Naive thymus-derived CD4-positive, alpha-beta T cell (primary cell): ENCODE measurements at regions of chr3 and their contacts with region 1.

Region 1: DNA sequence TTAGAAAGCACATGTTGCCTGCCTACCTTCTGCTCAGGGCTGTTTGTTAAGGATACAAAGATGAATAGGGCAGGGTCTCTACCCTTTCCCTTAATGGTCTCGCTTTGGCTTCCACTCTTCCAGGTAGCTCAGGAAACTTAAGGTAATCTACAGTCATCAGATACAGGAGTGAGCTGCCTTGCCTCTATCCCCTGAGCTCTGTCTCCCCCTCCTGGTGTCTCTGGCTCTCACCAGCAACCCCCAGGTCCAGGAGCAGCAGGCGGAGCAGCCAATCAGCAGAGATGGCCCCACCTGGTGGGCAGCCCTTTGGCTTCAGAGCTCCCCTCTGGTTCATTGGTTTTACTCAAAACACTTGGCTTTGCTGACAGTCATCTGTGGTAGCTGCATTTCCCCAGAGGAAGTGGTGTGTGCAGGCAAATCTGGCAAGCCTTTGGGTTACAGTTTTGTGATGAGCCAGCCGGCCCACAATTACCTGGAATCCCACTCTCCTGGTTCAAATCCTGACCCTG is 8.5 kb upstream of the CX3CR1 start:
- DNase-seq: peak; percentile 49 to 77 (median 71)
- ATAC-seq: peak; percentile 97
- H3K4me3 ChIP-seq: no peak overlapping the region
- H3K4me3 Mint-ChIP-seq: peak overlapping the region in 1 of 10 donors; percentile 3
- H3K27ac ChIP-seq: no peak overlapping the region
- H3K27ac Mint-ChIP-seq: peak overlapping the region in 2 of 9 donors; percentile 7 to 66
- H3K4me1 ChIP-seq: peaks cover 0 to 4% of the 10 kb centered on the region in 2 donors
- H3K4me1 Mint-ChIP-seq: peaks cover 7 to 62% (median 17%) of the 10 kb centered on the region in 7 donors
- H3K27me3 ChIP-seq: no peaks in the 10 kb centered on the region
- H3K27me3 Mint-ChIP-seq: no peaks in the 10 kb centered on the region

Region 2: GRCh38 chr3:38018296-38019266 is 1269.8 kb before region 1 on chr3:
- CTCF ChIA-PET with region 1: no interaction called
- POLR2A ChIA-PET with region 1: no interaction called
- intact Hi-C with region 1: no loop called
- DNase-seq: no peak
- ATAC-seq: no peak
- H3K4me3 ChIP-seq: no peak overlapping the region
- H3K4me3 Mint-ChIP-seq: no peak overlapping the region
- H3K27ac ChIP-seq: no peak overlapping the region
- H3K27ac Mint-ChIP-seq: peak overlapping the region in 4 of 9 donors; percentile 54 to 72 (median 58)
- H3K4me1 ChIP-seq: peaks cover 8% of the 10 kb centered on the region in 2 donors
- H3K4me1 Mint-ChIP-seq: peaks cover 9 to 22% (median 14%) of the 10 kb centered on the region in 7 donors
- H3K27me3 ChIP-seq: no peaks in the 10 kb centered on the region
- H3K27me3 Mint-ChIP-seq: no peaks in the 10 kb centered on the region

Region 3: DNA sequence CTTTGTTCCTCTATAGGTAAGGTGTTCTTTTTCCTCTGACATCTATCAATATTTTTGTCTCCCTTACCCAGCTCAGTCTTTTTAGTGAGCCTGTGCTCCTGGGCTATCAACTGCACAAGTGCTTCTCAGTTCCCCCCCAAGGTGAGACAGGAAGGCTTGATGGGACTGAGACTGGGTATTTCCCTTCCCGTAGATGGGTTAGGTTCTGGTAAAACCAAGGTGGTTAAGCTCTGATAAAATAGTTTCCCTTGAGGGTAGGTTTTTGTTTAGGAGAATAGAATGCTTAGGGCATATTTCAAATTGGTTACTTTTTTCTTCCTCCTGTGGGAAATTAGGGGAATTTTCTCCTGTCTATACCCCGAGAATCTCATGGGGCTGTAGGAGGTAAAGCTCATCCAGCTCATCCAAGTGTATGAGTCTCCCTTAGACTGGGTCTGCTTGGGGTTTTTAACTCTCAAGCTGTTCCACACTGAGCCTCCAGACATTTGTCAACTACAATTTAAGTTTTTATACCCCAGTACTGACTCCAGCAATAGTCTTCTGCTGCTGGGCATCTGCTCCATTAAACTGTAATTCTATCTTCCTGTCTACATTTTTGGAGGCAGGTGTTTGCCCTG is 1078.1 kb before region 1 on chr3:
- CTCF ChIA-PET with region 1: no interaction called
- POLR2A ChIA-PET with region 1: no interaction called
- intact Hi-C with region 1: no loop called
- DNase-seq: no peak
- ATAC-seq: peak; percentile 48
- H3K4me3 ChIP-seq: no peak overlapping the region
- H3K4me3 Mint-ChIP-seq: peak overlapping the region in 2 of 10 donors; percentile 21 to 52
- H3K27ac ChIP-seq: no peak overlapping the region
- H3K27ac Mint-ChIP-seq: peak overlapping the region in 5 of 9 donors; percentile 5 to 74 (median 65)
- H3K4me1 ChIP-seq: no peaks in the 10 kb centered on the region
- H3K4me1 Mint-ChIP-seq: peaks cover 11 to 71% (median 68%) of the 10 kb centered on the region in 7 donors
- H3K27me3 ChIP-seq: no peaks in the 10 kb centered on the region
- H3K27me3 Mint-ChIP-seq: no peaks in the 10 kb centered on the region

Region 4: DNA sequence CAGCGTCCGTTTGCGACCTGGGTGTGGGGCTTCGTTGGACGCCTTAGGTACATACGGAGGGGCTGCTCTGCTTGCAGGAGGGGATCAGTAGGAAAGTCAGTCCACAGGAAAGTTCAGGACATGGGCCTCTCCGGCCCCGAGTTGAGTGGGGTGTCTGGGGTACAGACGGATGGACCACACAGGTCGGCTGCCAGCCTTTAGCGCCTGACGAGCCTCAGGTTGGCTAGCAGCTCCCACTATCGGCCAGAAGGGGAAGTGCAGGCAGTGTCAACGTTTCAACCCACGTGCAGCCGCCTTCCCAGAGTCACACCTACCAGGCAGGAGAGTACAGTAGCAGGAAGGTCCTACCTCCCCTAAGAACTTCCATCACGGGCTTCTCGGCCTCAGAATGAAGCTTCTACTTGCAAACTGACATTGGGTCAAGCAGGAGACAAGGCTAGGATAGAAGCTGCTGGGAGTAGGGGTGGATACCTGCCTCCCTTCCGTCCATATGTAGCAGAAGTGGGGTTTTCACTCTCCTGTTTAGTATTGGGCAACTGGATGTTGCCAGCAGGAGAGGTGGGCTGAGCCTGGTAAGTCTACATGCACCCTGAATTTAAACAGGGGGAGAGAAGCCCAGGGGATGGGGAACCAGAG is 637.1 kb before region 1 on chr3:
- CTCF ChIA-PET with region 1: interaction called, 4 read pairs
- POLR2A ChIA-PET with region 1: no interaction called
- intact Hi-C with region 1: loop called in 1 of 2 experiments (anchors 10 kb)
- DNase-seq: peak; percentile 38 to 73 (median 66)
- ATAC-seq: peak; percentile 73
- H3K4me3 ChIP-seq: peak overlapping the region; percentile 34
- H3K4me3 Mint-ChIP-seq: no peak overlapping the region
- H3K27ac ChIP-seq: no peak overlapping the region
- H3K27ac Mint-ChIP-seq: no peak overlapping the region
- H3K4me1 ChIP-seq: peaks cover 5 to 6% of the 10 kb centered on the region in 2 donors
- H3K4me1 Mint-ChIP-seq: peaks cover 0 to 10% (median 8%) of the 10 kb centered on the region in 7 donors
- H3K27me3 ChIP-seq: peaks cover 10 to 11% of the 10 kb centered on the region in 2 donors
- H3K27me3 Mint-ChIP-seq: peaks cover 4 to 23% (median 16%) of the 10 kb centered on the region in 5 donors

Region 5: GRCh38 chr3:39107388-39108199 is 180.8 kb before region 1 on chr3 and contains the starts of genes GORASP1 and TTC21A:
- CTCF ChIA-PET with region 1: interaction called, 21 read pairs
- POLR2A ChIA-PET with region 1: interaction called, 3 read pairs
- intact Hi-C with region 1: no loop called
- DNase-seq: peak; percentile 33 to 79 (median 53)
- ATAC-seq: peak; percentile 74
- H3K4me3 ChIP-seq: peak within 1 kb of the TSS; percentile 95
- H3K4me3 Mint-ChIP-seq: peak within 1 kb of the TSS; percentile 88 to 100 (median 96)
- H3K27ac ChIP-seq: peak within 1 kb of the TSS; percentile 78
- H3K27ac Mint-ChIP-seq: peak within 1 kb of the TSS; percentile 84 to 96 (median 92)
- H3K4me1 ChIP-seq: peaks cover 18 to 22% of the 10 kb centered on the region in 2 donors
- H3K4me1 Mint-ChIP-seq: peaks cover 45 to 62% (median 52%) of the 10 kb centered on the region in 7 donors
- H3K27me3 ChIP-seq: no peaks in the 10 kb centered on the region
- H3K27me3 Mint-ChIP-seq: peaks cover 0 to 5% (median 0%) of the 10 kb centered on the region in 5 donors
- total RNA-seq, gene GORASP1: 28.2 to 58.5 (median 44.6) TPM
- total RNA-seq, gene TTC21A: 2.8 to 9.7 (median 5.3) TPM

Region 6: GRCh38 chr3:39208463-39209055 is 79.8 kb before region 1 on chr3:
- CTCF ChIA-PET with region 1: interaction called, 12 read pairs
- POLR2A ChIA-PET with region 1: no interaction called
- intact Hi-C with region 1: loop called (anchors 1 kb)
- DNase-seq: peak in 5 of 9 donors; percentile 12 to 36 (median 22)
- ATAC-seq: peak; percentile 70
- H3K4me3 ChIP-seq: no peak overlapping the region
- H3K4me3 Mint-ChIP-seq: no peak overlapping the region
- H3K27ac ChIP-seq: no peak overlapping the region
- H3K27ac Mint-ChIP-seq: no peak overlapping the region
- H3K4me1 ChIP-seq: peaks cover 0 to 6% of the 10 kb centered on the region in 2 donors
- H3K4me1 Mint-ChIP-seq: peaks cover 0 to 25% (median 7%) of the 10 kb centered on the region in 7 donors
- H3K27me3 ChIP-seq: no peaks in the 10 kb centered on the region
- H3K27me3 Mint-ChIP-seq: peaks cover 0 to 32% (median 3%) of the 10 kb centered on the region in 5 donors

Region 7: GRCh38 chr3:39323494-39323893 is 35.1 kb after region 1 on chr3:
- CTCF ChIA-PET with region 1: no interaction called
- POLR2A ChIA-PET with region 1: no interaction called
- intact Hi-C with region 1: no loop called
- DNase-seq: no peak
- ATAC-seq: no peak
- H3K4me3 ChIP-seq: no peak overlapping the region
- H3K4me3 Mint-ChIP-seq: peak overlapping the region in 5 of 10 donors; percentile 15 to 32 (median 18)
- H3K27ac ChIP-seq: no peak overlapping the region
- H3K27ac Mint-ChIP-seq: peak overlapping the region in 1 of 9 donors; percentile 24
- H3K4me1 ChIP-seq: peaks cover 0 to 4% of the 10 kb centered on the region in 2 donors
- H3K4me1 Mint-ChIP-seq: peaks cover 8 to 74% (median 19%) of the 10 kb centered on the region in 7 donors
- H3K27me3 ChIP-seq: no peaks in the 10 kb centered on the region
- H3K27me3 Mint-ChIP-seq: peaks cover 0 to 6% (median 0%) of the 10 kb centered on the region in 5 donors

Region 8: GRCh38 chr3:39346785-39347585 is 58.6 kb after region 1 on chr3:
- CTCF ChIA-PET with region 1: interaction called, 13 read pairs
- POLR2A ChIA-PET with region 1: no interaction called
- intact Hi-C with region 1: no loop called
- DNase-seq: peak in 1 of 9 donors; percentile 11
- ATAC-seq: no peak
- H3K4me3 ChIP-seq: no peak overlapping the region
- H3K4me3 Mint-ChIP-seq: peak overlapping the region; percentile 0 to 71 (median 36)
- H3K27ac ChIP-seq: no peak overlapping the region
- H3K27ac Mint-ChIP-seq: peak overlapping the region; percentile 20 to 80 (median 71)
- H3K4me1 ChIP-seq: peaks cover 0 to 19% of the 10 kb centered on the region in 2 donors
- H3K4me1 Mint-ChIP-seq: peaks cover 8 to 63% (median 52%) of the 10 kb centered on the region in 7 donors
- H3K27me3 ChIP-seq: no peaks in the 10 kb centered on the region
- H3K27me3 Mint-ChIP-seq: no peaks in the 10 kb centered on the region